ENCODE measurements at regions of chr15 and their contacts with region 1.

Region 1: DNA sequence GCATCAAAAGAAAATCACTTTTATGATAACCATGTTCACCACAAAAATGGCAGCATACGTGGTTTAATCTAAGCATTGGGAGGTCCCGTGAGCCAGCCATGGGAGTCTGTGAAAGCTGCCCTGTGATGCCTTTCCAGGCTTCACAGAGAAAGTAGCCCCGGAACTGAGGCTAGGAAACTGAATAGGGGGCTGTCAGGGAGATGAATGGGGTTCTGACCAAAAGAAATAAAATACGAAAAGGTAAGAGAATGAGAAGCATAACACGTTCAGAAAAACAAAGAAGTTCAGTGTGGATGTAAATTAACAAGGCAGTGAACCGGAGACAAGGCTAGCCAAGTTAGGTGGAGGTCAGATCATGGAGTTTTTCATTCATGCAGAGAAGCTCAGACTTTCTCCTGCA is 118.9 kb downstream of the ANXA2 start:
- DNase-seq: no peak
- ATAC-seq: no peak
- H3K4me3 ChIP-seq: no peak overlapping the region
- H3K27ac ChIP-seq: no peak overlapping the region
- H3K4me1 ChIP-seq: no peaks in the 10 kb centered on the region
- H3K27me3 ChIP-seq: peaks cover 8% of the 10 kb centered on the region; the same call in 1 of the 2 replicates
- CTCF ChIP-seq: no peak

Region 2: DNA sequence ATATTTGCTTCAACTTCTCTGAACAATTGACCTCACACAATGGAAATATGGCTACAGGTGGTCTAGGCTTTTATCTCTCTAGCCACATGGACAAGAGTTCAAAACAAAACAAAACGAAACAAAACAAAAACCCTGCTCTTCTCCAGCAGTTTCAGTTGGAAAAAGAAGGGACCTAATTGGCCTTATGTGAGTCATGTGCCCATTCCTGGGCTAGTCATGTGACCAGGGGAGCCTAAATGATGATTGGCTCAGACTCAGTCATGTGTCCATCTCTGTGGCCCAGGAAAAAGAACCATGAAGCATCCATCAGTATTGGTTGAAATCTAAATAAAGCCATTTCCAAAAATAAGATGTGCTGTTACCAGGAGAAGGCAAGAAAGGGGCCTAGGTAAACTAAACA is 22.1 kb after region 1 on chr15:
- CTCF ChIA-PET with region 1: no interaction called
- POLR2A ChIA-PET with region 1: interaction called, 11 read pairs
- in situ Hi-C with region 1: no loop called
- intact Hi-C with region 1: no loop called
- DNase-seq: no peak
- ATAC-seq: no peak
- H3K4me3 ChIP-seq: no peak overlapping the region
- H3K27ac ChIP-seq: no peak overlapping the region
- H3K4me1 ChIP-seq: no peaks in the 10 kb centered on the region
- H3K27me3 ChIP-seq: peaks cover 3% of the 10 kb centered on the region; the same call in 1 of the 2 replicates
- CTCF ChIP-seq: no peak

Measured in Panc1 (cell line).